CD4-positive, alpha-beta T cell (primary cell): ENCODE measurements at regions of chr10 and their contacts with region 1.

Region 1: DNA sequence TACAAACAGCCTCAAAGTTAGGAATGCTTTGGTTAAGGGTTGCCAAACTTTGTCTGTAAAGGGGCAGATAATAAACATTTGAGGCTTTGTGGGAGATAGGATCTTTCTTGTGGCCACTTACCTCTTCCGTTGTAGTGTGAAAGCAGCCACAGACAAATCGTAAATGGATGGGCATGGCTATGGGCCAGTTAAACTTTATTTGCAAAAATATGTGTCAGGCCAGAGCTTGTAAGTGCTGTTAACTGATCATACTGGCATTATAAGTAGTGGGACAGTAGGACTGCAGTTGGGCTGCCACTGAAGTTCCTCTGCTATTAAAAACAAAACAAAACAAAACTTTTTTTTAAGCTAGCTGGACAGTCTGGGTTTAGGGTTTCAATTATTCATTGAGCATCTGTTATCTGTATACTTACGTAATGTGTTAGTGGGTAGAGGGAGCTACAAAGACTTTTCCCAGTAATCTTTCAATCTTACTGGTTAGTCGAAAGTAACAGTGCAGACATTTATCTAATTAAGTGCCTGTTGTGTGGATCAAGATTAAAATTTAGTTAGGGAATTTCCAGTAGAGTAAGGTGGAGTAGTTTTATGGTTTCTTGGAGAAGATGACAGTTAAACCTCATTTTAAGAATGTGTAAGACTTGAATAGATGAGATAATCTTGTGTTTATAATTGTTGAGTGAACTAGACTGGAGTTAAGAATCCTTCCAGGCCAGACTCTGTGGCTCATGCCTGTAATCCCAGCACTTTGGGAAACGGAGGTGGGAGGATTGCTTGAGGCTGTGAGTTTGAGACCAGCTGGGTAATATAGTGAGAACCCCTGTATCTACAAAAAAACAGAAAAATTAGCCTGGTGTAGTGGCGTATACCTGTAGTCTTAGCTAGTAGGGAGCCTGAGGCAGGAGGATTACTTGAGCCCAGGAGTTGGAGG is 100.1 kb downstream of the BTRC start:
- DNase-seq: peak in 3 of 14 experiments; percentile 4 to 21 (median 16)
- ATAC-seq: no peak
- H3K4me3 ChIP-seq: no peak overlapping the region
- H3K4me3 Mint-ChIP-seq: no peak overlapping the region
- H3K27ac ChIP-seq: no peak overlapping the region
- H3K27ac Mint-ChIP-seq: no peak overlapping the region
- H3K4me1 ChIP-seq: peaks cover 10% of the 10 kb centered on the region
- H3K4me1 Mint-ChIP-seq: peaks cover 34% of the 10 kb centered on the region
- H3K27me3 ChIP-seq: no peaks in the 10 kb centered on the region
- H3K27me3 Mint-ChIP-seq: no peaks in the 10 kb centered on the region
- CTCF ChIP-seq: no peak

Region 2: DNA sequence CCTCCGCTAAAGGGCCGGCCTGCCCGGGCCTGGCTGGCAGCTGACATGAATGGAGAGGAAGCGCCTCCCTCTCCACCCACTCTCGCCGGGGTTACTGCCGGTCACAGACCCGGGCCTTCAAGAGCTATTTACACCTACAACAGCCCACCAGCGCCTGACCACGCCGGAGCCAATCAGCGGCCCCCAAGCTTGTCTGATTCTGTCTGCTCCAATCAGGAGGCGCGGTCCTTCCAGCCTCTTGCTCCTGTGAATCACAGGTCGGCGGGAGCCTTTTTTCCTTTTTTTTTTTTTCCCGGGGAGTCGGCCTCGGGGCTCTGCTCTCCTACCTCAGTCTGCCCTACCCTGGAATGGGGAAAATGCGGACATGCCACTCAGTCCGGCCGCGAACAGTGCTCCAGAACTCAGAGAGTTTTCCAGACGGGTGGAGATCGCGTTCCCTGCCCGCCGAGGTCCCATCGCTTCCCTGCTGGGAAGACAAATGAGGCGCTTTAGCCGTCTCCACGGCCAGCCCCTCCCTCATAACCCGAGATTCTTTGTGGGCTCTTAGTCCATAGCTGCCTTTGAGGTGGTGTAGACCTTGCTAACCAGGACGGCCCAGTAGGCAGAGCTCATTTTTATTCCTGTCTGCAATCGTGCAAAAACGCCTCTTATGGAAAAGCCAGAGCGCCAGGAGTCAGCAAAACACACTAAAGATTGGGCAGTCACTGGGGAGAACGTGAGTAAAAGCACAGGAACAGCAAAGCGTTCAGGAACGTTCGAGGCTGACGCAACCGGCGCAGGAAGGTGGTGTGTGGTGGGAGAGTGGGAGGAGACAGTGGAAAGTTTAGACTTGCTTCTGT is 1080.5 kb before region 1 on chr10:
- CTCF ChIA-PET with region 1: no interaction called
- POLR2A ChIA-PET with region 1: no interaction called
- intact Hi-C with region 1: no loop called
- DNase-seq: peak; percentile 58 to 91 (median 73)
- ATAC-seq: peak; percentile 69
- H3K4me3 ChIP-seq: peak overlapping the region; percentile 81
- H3K4me3 Mint-ChIP-seq: no peak overlapping the region
- H3K27ac ChIP-seq: peak overlapping the region; percentile 78 to 90
- H3K27ac Mint-ChIP-seq: no peak overlapping the region
- H3K4me1 ChIP-seq: peaks cover 49% of the 10 kb centered on the region
- H3K4me1 Mint-ChIP-seq: peaks cover 24% of the 10 kb centered on the region
- H3K27me3 ChIP-seq: no peaks in the 10 kb centered on the region
- H3K27me3 Mint-ChIP-seq: no peaks in the 10 kb centered on the region
- CTCF ChIP-seq: no peak

Region 3: GRCh38 chr10:101397140-101397539 is 56.9 kb before region 1 on chr10:
- CTCF ChIA-PET with region 1: no interaction called
- POLR2A ChIA-PET with region 1: no interaction called
- intact Hi-C with region 1: loop called in 1 of 2 experiments (anchors 10 kb)
- DNase-seq: peak in 8 of 14 experiments; percentile 7 to 85 (median 32)
- ATAC-seq: peak; percentile 83
- H3K4me3 ChIP-seq: no peak overlapping the region
- H3K4me3 Mint-ChIP-seq: no peak overlapping the region
- H3K27ac ChIP-seq: no peak overlapping the region
- H3K27ac Mint-ChIP-seq: peak overlapping the region; percentile 46
- H3K4me1 ChIP-seq: peaks cover 8% of the 10 kb centered on the region
- H3K4me1 Mint-ChIP-seq: peaks cover 52% of the 10 kb centered on the region
- H3K27me3 ChIP-seq: no peaks in the 10 kb centered on the region
- H3K27me3 Mint-ChIP-seq: no peaks in the 10 kb centered on the region
- CTCF ChIP-seq: no peak

Region 4: GRCh38 chr10:101467286-101467770 is 13.3 kb after region 1 on chr10:
- CTCF ChIA-PET with region 1: interaction called, 14 read pairs
- POLR2A ChIA-PET with region 1: interaction called, 3 read pairs
- intact Hi-C with region 1: no loop called
- DNase-seq: peak in 6 of 14 experiments; percentile 7 to 75 (median 41)
- ATAC-seq: peak; percentile 89
- H3K4me3 ChIP-seq: no peak overlapping the region
- H3K4me3 Mint-ChIP-seq: no peak overlapping the region
- H3K27ac ChIP-seq: no peak overlapping the region
- H3K27ac Mint-ChIP-seq: no peak overlapping the region
- H3K4me1 ChIP-seq: no peaks in the 10 kb centered on the region
- H3K4me1 Mint-ChIP-seq: peaks cover 17% of the 10 kb centered on the region
- H3K27me3 ChIP-seq: no peaks in the 10 kb centered on the region
- H3K27me3 Mint-ChIP-seq: no peaks in the 10 kb centered on the region
- CTCF ChIP-seq: peak; percentile 80